B cell (primary cell): ENCODE measurements at regions of chr2 and their contacts with region 1.

Region 1: DNA sequence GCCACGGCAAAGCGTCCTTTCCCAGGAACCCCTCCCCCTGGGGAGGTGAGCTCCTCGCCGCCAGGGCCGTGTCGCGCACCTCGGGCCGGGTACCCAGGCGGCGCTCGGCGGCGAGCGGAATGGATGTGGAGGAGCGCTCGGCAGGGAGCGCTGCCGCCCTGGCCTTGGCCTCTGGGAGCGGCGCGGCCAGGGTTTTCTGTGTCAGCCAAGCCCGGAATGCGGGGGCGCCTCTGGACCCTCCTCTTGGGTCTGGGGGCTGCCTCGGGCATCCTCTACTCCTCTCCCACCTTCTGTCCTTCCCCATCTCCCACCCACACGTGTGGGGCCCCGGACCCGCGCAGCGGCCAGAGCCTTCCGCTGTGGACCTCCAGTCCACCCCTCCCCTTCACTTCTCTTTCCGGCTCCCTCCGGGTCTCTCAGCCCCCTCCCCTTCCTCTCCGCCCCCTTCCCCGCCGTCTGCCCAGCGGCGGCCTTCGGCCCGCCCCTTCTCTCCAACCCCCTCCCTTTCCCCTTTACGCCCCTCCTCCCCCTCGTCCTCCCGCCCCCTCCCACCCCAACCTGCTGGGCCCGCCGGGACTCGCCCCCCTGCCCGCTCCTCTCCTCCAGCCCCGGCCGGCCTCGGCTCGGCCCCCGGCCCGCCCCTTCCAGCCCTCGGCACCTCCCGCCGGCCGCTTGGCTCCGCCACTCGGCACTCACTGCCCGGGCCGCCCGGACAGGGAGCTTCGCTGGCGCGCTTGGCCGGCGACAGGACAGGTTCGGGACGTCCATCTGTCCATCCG is at the start of gene MERTK:
- DNase-seq: peak; percentile 70
- ATAC-seq: peak; percentile 61
- H3K4me3 ChIP-seq: peak within 1 kb of the TSS; percentile 44 to 74 (median 58)
- H3K4me3 Mint-ChIP-seq: peak within 1 kb of the TSS; percentile 88
- H3K27ac ChIP-seq: no peak within 1 kb of the TSS
- H3K27ac Mint-ChIP-seq: peak within 1 kb of the TSS; percentile 61
- H3K4me1 ChIP-seq: peaks cover 21 to 23% of the 10 kb centered on the region in 2 donors
- H3K4me1 Mint-ChIP-seq: peaks cover 19% of the 10 kb centered on the region
- H3K27me3 ChIP-seq: peaks cover 0 to 47% (median 19%) of the 10 kb centered on the region in 4 experiments
- H3K27me3 Mint-ChIP-seq: peaks cover 47% of the 10 kb centered on the region
- CTCF ChIP-seq: peak; percentile 19
- total RNA-seq, gene MERTK: 0.19 and 0.34 TPM in 2 replicates

Region 2: GRCh38 chr2:110818767-110819481 is 1079.2 kb before region 1 on chr2:
- CTCF ChIA-PET with region 1: no interaction called
- POLR2A ChIA-PET with region 1: no interaction called
- intact Hi-C with region 1: no loop called
- DNase-seq: no peak
- ATAC-seq: no peak
- H3K4me3 ChIP-seq: no peak overlapping the region
- H3K4me3 Mint-ChIP-seq: no peak overlapping the region
- H3K27ac ChIP-seq: no peak overlapping the region
- H3K27ac Mint-ChIP-seq: no peak overlapping the region
- H3K4me1 ChIP-seq: peaks cover 9 to 11% of the 10 kb centered on the region in 2 donors
- H3K4me1 Mint-ChIP-seq: peaks cover 20% of the 10 kb centered on the region
- H3K27me3 ChIP-seq: peaks cover 0 to 5% (median 0%) of the 10 kb centered on the region in 4 experiments
- H3K27me3 Mint-ChIP-seq: peaks cover 18% of the 10 kb centered on the region
- CTCF ChIP-seq: no peak

Region 3: GRCh38 chr2:111918383-111918806 is 20.3 kb after region 1 on chr2:
- CTCF ChIA-PET with region 1: no interaction called
- POLR2A ChIA-PET with region 1: no interaction called
- intact Hi-C with region 1: no loop called
- DNase-seq: no peak
- ATAC-seq: no peak
- H3K4me3 ChIP-seq: no peak overlapping the region
- H3K4me3 Mint-ChIP-seq: no peak overlapping the region
- H3K27ac ChIP-seq: no peak overlapping the region
- H3K27ac Mint-ChIP-seq: no peak overlapping the region
- H3K4me1 ChIP-seq: no peaks in the 10 kb centered on the region
- H3K4me1 Mint-ChIP-seq: no peaks in the 10 kb centered on the region
- H3K27me3 ChIP-seq: no peaks in the 10 kb centered on the region
- H3K27me3 Mint-ChIP-seq: no peaks in the 10 kb centered on the region
- CTCF ChIP-seq: no peak

Region 4: GRCh38 chr2:111946294-111947114 is 48.4 kb after region 1 on chr2:
- CTCF ChIA-PET with region 1: no interaction called
- POLR2A ChIA-PET with region 1: no interaction called
- intact Hi-C with region 1: no loop called
- DNase-seq: no peak
- ATAC-seq: no peak
- H3K4me3 ChIP-seq: no peak overlapping the region
- H3K4me3 Mint-ChIP-seq: no peak overlapping the region
- H3K27ac ChIP-seq: no peak overlapping the region
- H3K27ac Mint-ChIP-seq: no peak overlapping the region
- H3K4me1 ChIP-seq: no peaks in the 10 kb centered on the region
- H3K4me1 Mint-ChIP-seq: no peaks in the 10 kb centered on the region
- H3K27me3 ChIP-seq: peaks cover 0 to 11% (median 3%) of the 10 kb centered on the region in 4 experiments
- H3K27me3 Mint-ChIP-seq: peaks cover 11% of the 10 kb centered on the region
- CTCF ChIP-seq: no peak

Region 5: DNA sequence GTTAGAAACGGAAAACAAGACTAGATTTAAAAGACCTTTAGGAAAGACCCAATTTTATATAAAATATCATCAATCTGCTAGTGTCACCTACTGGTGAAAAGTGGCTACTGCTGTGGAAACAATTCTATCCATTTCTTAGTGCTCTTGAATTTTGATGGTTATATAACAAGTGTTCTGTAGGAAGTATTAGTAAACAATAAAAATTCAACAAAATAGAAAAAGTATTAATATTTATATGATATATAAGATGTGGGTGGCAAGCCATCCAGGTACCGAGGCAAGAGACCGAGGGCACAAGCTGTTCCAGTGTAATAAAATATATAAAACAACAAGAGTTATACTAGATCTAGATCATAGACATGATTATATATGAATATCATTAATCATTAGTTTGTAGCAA is 150.8 kb after region 1 on chr2:
- CTCF ChIA-PET with region 1: interaction called, 17 read pairs
- POLR2A ChIA-PET with region 1: no interaction called
- intact Hi-C with region 1: no loop called
- DNase-seq: peak; percentile 68
- ATAC-seq: peak; percentile 82
- H3K4me3 ChIP-seq: no peak overlapping the region
- H3K4me3 Mint-ChIP-seq: no peak overlapping the region
- H3K27ac ChIP-seq: no peak overlapping the region
- H3K27ac Mint-ChIP-seq: no peak overlapping the region
- H3K4me1 ChIP-seq: peaks cover 6 to 7% of the 10 kb centered on the region in 2 donors
- H3K4me1 Mint-ChIP-seq: peaks cover 5% of the 10 kb centered on the region
- H3K27me3 ChIP-seq: peaks cover 0 to 3% (median 0%) of the 10 kb centered on the region in 4 experiments
- H3K27me3 Mint-ChIP-seq: peaks cover 9% of the 10 kb centered on the region
- CTCF ChIP-seq: peak; percentile 89